ENCODE measurements at regions of chr6 and their contacts with region 1.

Region 1: DNA sequence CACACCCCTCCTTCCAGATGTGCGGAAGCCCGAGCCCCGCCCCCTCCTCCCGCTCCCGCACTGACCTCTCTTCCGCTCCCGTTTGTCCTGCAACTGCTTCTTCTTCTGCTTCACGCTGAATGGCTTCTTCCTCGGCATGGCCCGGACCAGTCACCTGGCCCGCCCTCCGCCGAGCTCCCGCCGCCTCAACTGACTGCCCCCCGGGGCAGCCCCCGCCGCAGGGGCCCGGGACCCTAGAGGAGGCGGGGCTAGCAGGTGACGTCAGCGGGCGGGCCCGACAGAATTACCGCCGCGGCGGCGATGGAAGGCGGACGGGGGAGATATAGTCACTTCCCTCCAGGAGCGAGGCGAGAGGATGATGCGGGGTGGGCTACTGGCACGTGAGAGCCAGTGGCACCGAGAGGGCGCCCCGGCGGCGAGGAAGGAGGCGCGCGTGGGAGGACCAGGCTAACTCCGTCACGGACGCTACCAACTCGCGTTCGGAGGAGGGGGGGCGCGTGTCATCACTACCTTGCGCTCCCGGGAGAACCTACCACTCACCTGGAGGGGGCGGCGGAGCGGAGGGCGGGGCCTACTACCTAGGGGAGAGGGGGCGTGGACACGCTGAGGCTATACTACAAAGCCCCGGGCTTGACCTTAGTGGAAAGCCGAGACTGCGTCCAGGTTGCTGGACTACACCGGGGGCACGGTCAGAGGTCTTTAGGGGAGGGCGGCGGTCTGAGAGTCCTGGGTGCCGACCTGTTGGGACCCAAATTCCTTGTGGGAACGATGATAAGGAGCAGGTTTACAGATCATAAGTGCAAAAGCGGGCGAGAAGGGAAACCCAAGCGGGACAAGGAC is at the start of gene GNL1:
- DNase-seq: peak; percentile 98 to 99 (median 99)
- H3K4me3 ChIP-seq: peak within 1 kb of the TSS; percentile 79 to 99
- H3K4me3 Mint-ChIP-seq: peak within 1 kb of the TSS; percentile 97 to 100 (median 99)
- H3K27ac ChIP-seq: peak within 1 kb of the TSS; percentile 96
- H3K27ac Mint-ChIP-seq: peak within 1 kb of the TSS; percentile 97 to 100 (median 100)
- H3K4me1 ChIP-seq: peaks cover 30% of the 10 kb centered on the region
- H3K4me1 Mint-ChIP-seq: peaks cover 26 to 65% (median 38%) of the 10 kb centered on the region in 4 donors
- H3K27me3 ChIP-seq: no peaks in the 10 kb centered on the region
- H3K27me3 Mint-ChIP-seq: peaks cover 0 to 1% of the 10 kb centered on the region in 2 donors
- total RNA-seq, gene GNL1: 83.4 to 83.9 TPM

Region 2: GRCh38 chr6:30326526-30327260 is 229.6 kb before region 1 on chr6 and contains the start of gene TRIM39:
- CTCF ChIA-PET with region 1: no interaction called
- POLR2A ChIA-PET with region 1: no interaction called
- intact Hi-C with region 1: loop called (anchors 5 kb)
- DNase-seq: peak; percentile 91 to 94 (median 92)
- H3K4me3 ChIP-seq: peak within 1 kb of the TSS; percentile 68 to 82
- H3K4me3 Mint-ChIP-seq: peak within 1 kb of the TSS; percentile 92 to 98 (median 94)
- H3K27ac ChIP-seq: peak within 1 kb of the TSS; percentile 99
- H3K27ac Mint-ChIP-seq: peak within 1 kb of the TSS; percentile 97 to 100 (median 100)
- H3K4me1 ChIP-seq: peaks cover 53% of the 10 kb centered on the region
- H3K4me1 Mint-ChIP-seq: peaks cover 41 to 69% (median 56%) of the 10 kb centered on the region in 4 donors
- H3K27me3 ChIP-seq: no peaks in the 10 kb centered on the region
- H3K27me3 Mint-ChIP-seq: no peaks in the 10 kb centered on the region
- total RNA-seq, gene TRIM39: 27.7 to 30.9 TPM

Region 3: DNA sequence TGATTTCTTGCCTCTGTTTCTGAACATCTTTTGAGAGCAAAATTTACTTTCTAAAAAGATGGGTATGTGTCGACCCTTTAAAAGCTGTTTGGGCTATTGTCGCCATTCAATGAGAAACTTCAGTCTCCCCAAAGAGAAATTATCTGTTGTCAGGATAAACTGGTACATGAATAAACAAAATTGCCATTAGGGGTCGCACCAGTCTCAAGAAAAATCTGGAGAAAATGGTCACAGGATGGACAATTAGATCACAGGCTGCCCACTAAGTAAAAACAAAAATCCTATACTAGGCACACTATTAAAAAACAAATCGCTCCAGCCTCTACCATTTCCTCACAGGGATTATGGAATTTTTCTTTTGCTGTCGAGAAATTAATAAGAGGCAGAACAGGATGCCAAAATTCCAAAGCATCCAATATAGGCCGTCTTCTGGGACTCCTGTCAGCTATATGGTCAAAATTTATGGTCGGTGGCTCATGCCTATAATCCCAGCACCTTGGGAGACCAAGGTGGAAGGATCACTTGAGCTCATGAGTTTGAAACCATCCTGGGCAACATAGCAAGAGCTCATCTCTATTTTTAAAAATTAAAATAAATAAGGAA is 72.5 kb before region 1 on chr6:
- CTCF ChIA-PET with region 1: interaction called, 416 read pairs
- POLR2A ChIA-PET with region 1: interaction called, 3 read pairs
- intact Hi-C with region 1: no loop called
- DNase-seq: peak in 4 of 5 donors; percentile 44 to 57 (median 48)
- H3K4me3 ChIP-seq: no peak overlapping the region
- H3K4me3 Mint-ChIP-seq: no peak overlapping the region
- H3K27ac ChIP-seq: no peak overlapping the region
- H3K27ac Mint-ChIP-seq: peak overlapping the region in 2 of 7 donors; percentile 8 to 29
- H3K4me1 ChIP-seq: peaks cover 24% of the 10 kb centered on the region
- H3K4me1 Mint-ChIP-seq: peaks cover 27 to 42% (median 31%) of the 10 kb centered on the region in 4 donors
- H3K27me3 ChIP-seq: peaks cover 22% of the 10 kb centered on the region
- H3K27me3 Mint-ChIP-seq: peaks cover 18 to 22% of the 10 kb centered on the region in 2 donors

Region 4: GRCh38 chr6:30515932-30516753 is 40.1 kb before region 1 on chr6:
- CTCF ChIA-PET with region 1: interaction called, 3 read pairs
- POLR2A ChIA-PET with region 1: interaction called, 17 read pairs
- intact Hi-C with region 1: loop called (anchors 1 kb)
- DNase-seq: peak; percentile 91 to 98 (median 96)
- H3K4me3 ChIP-seq: peak overlapping the region; percentile 42 to 64
- H3K4me3 Mint-ChIP-seq: peak overlapping the region; percentile 85 to 92 (median 88)
- H3K27ac ChIP-seq: peak overlapping the region; percentile 91
- H3K27ac Mint-ChIP-seq: peak overlapping the region; percentile 95 to 99 (median 99)
- H3K4me1 ChIP-seq: peaks cover 66% of the 10 kb centered on the region
- H3K4me1 Mint-ChIP-seq: peaks cover 28 to 78% (median 49%) of the 10 kb centered on the region in 4 donors
- H3K27me3 ChIP-seq: no peaks in the 10 kb centered on the region
- H3K27me3 Mint-ChIP-seq: no peaks in the 10 kb centered on the region

Region 5: DNA sequence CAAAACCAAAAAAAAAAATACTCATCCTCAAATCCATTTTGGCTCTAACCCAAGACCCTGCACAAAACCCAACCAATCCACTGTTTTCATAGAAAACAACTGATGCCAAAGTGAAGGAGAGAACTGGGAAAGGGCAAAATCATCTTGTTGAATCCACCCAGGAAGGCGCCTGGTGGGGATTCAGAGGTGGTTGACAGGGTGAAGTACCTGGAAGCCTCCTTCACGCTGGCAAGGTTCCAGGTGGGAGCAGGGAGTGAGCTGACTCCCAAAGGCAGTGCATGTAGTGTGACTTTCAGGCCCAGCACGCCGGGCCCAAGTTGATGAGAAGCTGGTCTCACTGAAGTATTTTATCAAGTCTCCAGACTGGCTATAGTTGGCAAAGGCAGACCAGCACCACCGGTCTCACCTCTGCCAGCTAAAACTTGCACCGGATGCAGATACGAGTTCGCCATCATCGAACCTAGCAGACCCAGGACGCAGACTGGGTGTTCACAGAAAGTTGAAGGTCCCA is 44.2 kb after region 1 on chr6:
- CTCF ChIA-PET with region 1: interaction called, 242 read pairs
- POLR2A ChIA-PET with region 1: interaction called, 16 read pairs
- intact Hi-C with region 1: loop called (anchors 1 kb)
- DNase-seq: no peak
- H3K4me3 ChIP-seq: no peak overlapping the region
- H3K4me3 Mint-ChIP-seq: no peak overlapping the region
- H3K27ac ChIP-seq: no peak overlapping the region
- H3K27ac Mint-ChIP-seq: peak overlapping the region in 2 of 7 donors; percentile 41 to 64
- H3K4me1 ChIP-seq: no peaks in the 10 kb centered on the region
- H3K4me1 Mint-ChIP-seq: peaks cover 7 to 26% (median 17%) of the 10 kb centered on the region in 4 donors
- H3K27me3 ChIP-seq: no peaks in the 10 kb centered on the region
- H3K27me3 Mint-ChIP-seq: no peaks in the 10 kb centered on the region

Region 6: DNA sequence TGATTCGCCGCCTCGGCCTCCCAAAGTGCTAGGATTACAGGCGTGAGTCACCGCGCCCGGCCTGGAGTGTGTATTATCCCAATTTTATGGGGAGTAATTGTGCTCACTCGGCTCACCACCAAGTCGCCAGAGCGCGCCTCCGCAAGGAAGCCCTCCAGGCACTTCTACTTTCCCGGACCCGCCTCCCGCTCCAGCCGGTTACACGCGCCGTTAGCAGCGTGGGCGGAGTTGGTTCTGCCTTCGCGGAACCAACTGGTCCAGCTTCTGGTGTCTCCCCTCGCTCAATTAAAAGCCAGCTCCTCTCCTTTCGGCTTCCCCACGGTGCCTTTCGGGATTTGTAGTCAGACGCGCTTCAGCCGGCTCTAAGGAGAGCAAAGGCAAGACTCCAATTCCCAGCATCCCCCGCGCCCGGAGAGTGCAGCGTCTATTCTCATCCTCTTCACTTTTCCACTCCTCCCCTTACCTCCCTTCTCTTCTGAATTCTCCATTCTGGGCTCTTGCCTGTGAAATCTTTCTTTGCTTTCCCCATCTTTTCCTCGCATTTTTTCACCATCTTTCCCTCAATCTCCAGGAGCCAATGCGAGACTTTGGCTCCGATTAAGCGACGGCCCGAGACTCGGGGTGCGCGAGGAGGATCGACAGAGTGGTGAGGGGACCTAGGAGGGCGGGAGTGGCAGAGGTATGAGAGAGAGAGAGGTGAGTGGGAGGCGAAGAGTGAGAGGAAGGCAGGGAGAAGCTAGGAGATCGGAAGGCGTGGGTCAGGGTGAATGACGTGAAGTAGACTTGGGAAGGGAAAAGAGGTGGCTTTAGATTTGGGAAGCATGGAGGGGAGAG is 351.7 kb after region 1 on chr6 and contains the start of gene GTF2H4:
- CTCF ChIA-PET with region 1: no interaction called
- POLR2A ChIA-PET with region 1: no interaction called
- intact Hi-C with region 1: loop called (anchors 10 kb)
- DNase-seq: peak; percentile 90 to 97 (median 93)
- H3K4me3 ChIP-seq: peak within 1 kb of the TSS; percentile 75 to 97
- H3K4me3 Mint-ChIP-seq: peak within 1 kb of the TSS; percentile 96 to 100 (median 99)
- H3K27ac ChIP-seq: peak within 1 kb of the TSS; percentile 50
- H3K27ac Mint-ChIP-seq: peak within 1 kb of the TSS; percentile 36 to 96 (median 90)
- H3K4me1 ChIP-seq: peaks cover 14% of the 10 kb centered on the region
- H3K4me1 Mint-ChIP-seq: peaks cover 20 to 32% (median 23%) of the 10 kb centered on the region in 4 donors
- H3K27me3 ChIP-seq: no peaks in the 10 kb centered on the region
- H3K27me3 Mint-ChIP-seq: no peaks in the 10 kb centered on the region
- total RNA-seq, gene GTF2H4: 36.5 to 39.7 TPM

Measured in CD4-positive, alpha-beta memory T cell (primary cell).